Heart left ventricle (tissue), 16 donors: ENCODE measurements at regions of chr4 and their contacts with region 1.

Region 1: GRCh38 chr4:14994241-14994640 is 8.0 kb upstream of the CPEB2 start:
- DNase-seq: no peak
- ATAC-seq: no peak
- H3K4me3 ChIP-seq: no peak overlapping the region
- H3K27ac ChIP-seq: no peak overlapping the region
- H3K4me1 ChIP-seq: no peaks in the 10 kb centered on the region
- H3K27me3 ChIP-seq: no peaks in the 10 kb centered on the region
- CTCF ChIP-seq: no peak
- POLR2A ChIP-seq: no peak

Region 2: GRCh38 chr4:14749910-14750309 is 244.3 kb before region 1 on chr4:
- intact Hi-C with region 1: loop called in 1 of 10 experiments (anchors 10 kb)
- DNase-seq: peak in 4 of 5 donors; percentile 36 to 54 (median 38)
- ATAC-seq: peak; percentile 61 to 94 (median 90)
- H3K4me3 ChIP-seq: no peak overlapping the region
- H3K27ac ChIP-seq: no peak overlapping the region
- H3K4me1 ChIP-seq: peaks cover 0 to 5% (median 0%) of the 10 kb centered on the region in 12 donors
- H3K27me3 ChIP-seq: no peaks in the 10 kb centered on the region
- CTCF ChIP-seq: peak; percentile 12 to 62 (median 50)
- POLR2A ChIP-seq: no peak

Region 3: GRCh38 chr4:14871676-14872430 is 122.4 kb before region 1 on chr4:
- intact Hi-C with region 1: no loop called
- DNase-seq: no peak
- ATAC-seq: no peak
- H3K4me3 ChIP-seq: no peak overlapping the region
- H3K27ac ChIP-seq: no peak overlapping the region
- H3K4me1 ChIP-seq: peaks cover 0 to 7% (median under 1%) of the 10 kb centered on the region in 12 donors
- H3K27me3 ChIP-seq: peaks cover 0 to 6% (median 0%) of the 10 kb centered on the region in 9 donors
- CTCF ChIP-seq: peak in 6 of 12 donors; percentile 13 to 23 (median 18)
- POLR2A ChIP-seq: no peak

Region 4: GRCh38 chr4:15043226-15043625 is 49.0 kb after region 1 on chr4:
- intact Hi-C with region 1: no loop called
- DNase-seq: no peak
- ATAC-seq: no peak
- H3K4me3 ChIP-seq: no peak overlapping the region
- H3K27ac ChIP-seq: peak overlapping the region in 1 of 12 donors; percentile 20
- H3K4me1 ChIP-seq: peaks cover 0 to 33% (median 6%) of the 10 kb centered on the region in 12 donors
- H3K27me3 ChIP-seq: no peaks in the 10 kb centered on the region
- CTCF ChIP-seq: no peak
- POLR2A ChIP-seq: no peak

Region 5: GRCh38 chr4:15149839-15150476 is 155.7 kb after region 1 on chr4:
- intact Hi-C with region 1: loop called in 1 of 10 experiments (anchors 10 kb)
- DNase-seq: peak; percentile 82 to 89 (median 85)
- ATAC-seq: peak; percentile 81 to 95 (median 93)
- H3K4me3 ChIP-seq: no peak overlapping the region
- H3K27ac ChIP-seq: peak overlapping the region in 11 of 12 donors; percentile 22 to 73 (median 55)
- H3K4me1 ChIP-seq: peaks cover 0 to 48% (median 17%) of the 10 kb centered on the region in 12 donors
- H3K27me3 ChIP-seq: no peaks in the 10 kb centered on the region
- CTCF ChIP-seq: peak in 3 of 12 donors; percentile 17 to 23 (median 22)
- POLR2A ChIP-seq: no peak